ENCODE measurements at regions of chr1 and their contacts with region 1.

Region 1: GRCh38 chr1:152495066-152495675 is 15.4 kb upstream of the LCE5A start:
- DNase-seq: peak; percentile 21
- H3K4me3 ChIP-seq: no peak overlapping the region
- H3K27ac ChIP-seq: no peak overlapping the region
- H3K4me1 ChIP-seq: no peaks in the 10 kb centered on the region
- H3K27me3 ChIP-seq: no peaks in the 10 kb centered on the region
- CTCF ChIP-seq: peak; percentile 30 to 59
- POLR2A ChIP-seq: no peak

Region 2: GRCh38 chr1:152335399-152335798 is 159.8 kb before region 1 on chr1:
- CTCF ChIA-PET with region 1: no interaction called
- POLR2A ChIA-PET with region 1: no interaction called
- dilution Hi-C with region 1: no loop called
- intact Hi-C with region 1: no loop called
- DNase-seq: no peak
- H3K4me3 ChIP-seq: no peak overlapping the region
- H3K27ac ChIP-seq: no peak overlapping the region
- H3K4me1 ChIP-seq: no peaks in the 10 kb centered on the region
- H3K27me3 ChIP-seq: no peaks in the 10 kb centered on the region
- CTCF ChIP-seq: no peak
- POLR2A ChIP-seq: no peak

Region 3: GRCh38 chr1:152515434-152515783 is 20.2 kb after region 1 on chr1:
- CTCF ChIA-PET with region 1: interaction called, 20 read pairs
- POLR2A ChIA-PET with region 1: no interaction called
- dilution Hi-C with region 1: no loop called
- intact Hi-C with region 1: no loop called
- DNase-seq: no peak
- H3K4me3 ChIP-seq: no peak overlapping the region
- H3K27ac ChIP-seq: no peak overlapping the region
- H3K4me1 ChIP-seq: peaks cover 4% of the 10 kb centered on the region
- H3K27me3 ChIP-seq: peaks cover 15 to 16% of the 10 kb centered on the region in 2 experiments
- CTCF ChIP-seq: no peak
- POLR2A ChIP-seq: no peak

Region 4: GRCh38 chr1:152667648-152668047 is 172.5 kb after region 1 on chr1:
- CTCF ChIA-PET with region 1: no interaction called
- POLR2A ChIA-PET with region 1: no interaction called
- dilution Hi-C with region 1: no loop called
- intact Hi-C with region 1: no loop called
- DNase-seq: no peak
- H3K4me3 ChIP-seq: no peak overlapping the region
- H3K27ac ChIP-seq: no peak overlapping the region
- H3K4me1 ChIP-seq: no peaks in the 10 kb centered on the region
- H3K27me3 ChIP-seq: no peaks in the 10 kb centered on the region
- CTCF ChIP-seq: no peak
- POLR2A ChIP-seq: no peak

Region 5: GRCh38 chr1:153404768-153405167 is 909.6 kb after region 1 on chr1:
- CTCF ChIA-PET with region 1: no interaction called
- POLR2A ChIA-PET with region 1: no interaction called
- dilution Hi-C with region 1: no loop called
- intact Hi-C with region 1: no loop called
- DNase-seq: no peak
- H3K4me3 ChIP-seq: no peak overlapping the region
- H3K27ac ChIP-seq: no peak overlapping the region
- H3K4me1 ChIP-seq: no peaks in the 10 kb centered on the region
- H3K27me3 ChIP-seq: peaks cover 0 to 2% of the 10 kb centered on the region in 2 experiments
- CTCF ChIP-seq: peak; percentile 43 to 50
- POLR2A ChIP-seq: no peak

Measured in endothelial cell of umbilical vein (primary cell).